Activated B cell treated with CpG ODN at 0.5 μM for 24 hours (primary cell): ENCODE measurements at regions of chr1 and their contacts with region 1.

Region 1: GRCh38 chr1:179002552-179003345 is 22.9 kb upstream of the FAM20B start:
- DNase-seq: peak; percentile 79
- ATAC-seq: peak; percentile 95
- H3K4me3 Mint-ChIP-seq: peak overlapping the region; percentile 26
- H3K27ac Mint-ChIP-seq: no peak overlapping the region
- H3K4me1 Mint-ChIP-seq: peaks cover 15% of the 10 kb centered on the region
- H3K27me3 Mint-ChIP-seq: no peaks in the 10 kb centered on the region
- CTCF ChIP-seq: peak; percentile 96

Region 2: DNA sequence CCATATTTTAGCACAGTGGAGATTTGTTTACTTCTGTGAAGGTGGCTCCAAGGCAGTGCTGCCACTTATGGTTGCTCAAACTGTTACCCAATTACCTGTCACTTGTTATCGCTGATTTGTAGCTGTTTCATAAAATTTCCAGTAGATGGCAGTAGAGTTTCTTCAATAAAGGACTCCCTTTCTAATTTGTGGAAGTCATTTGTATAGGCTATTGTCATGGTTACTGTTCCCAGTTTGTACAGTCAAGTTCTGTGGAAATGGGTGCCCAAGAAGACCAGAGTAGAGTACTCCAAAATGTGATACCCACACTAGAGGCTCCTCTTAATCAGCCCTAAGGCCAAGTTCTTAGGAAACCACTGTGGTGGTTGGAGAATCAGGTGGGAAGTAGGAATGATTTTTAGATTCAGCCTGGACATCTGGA is 692.1 kb before region 1 on chr1:
- CTCF ChIA-PET with region 1: interaction called, 51 read pairs
- POLR2A ChIA-PET with region 1: no interaction called
- intact Hi-C with region 1: loop called (anchors 2 kb)
- DNase-seq: no peak
- ATAC-seq: peak; percentile 47
- H3K4me3 Mint-ChIP-seq: no peak overlapping the region
- H3K27ac Mint-ChIP-seq: no peak overlapping the region
- H3K4me1 Mint-ChIP-seq: no peaks in the 10 kb centered on the region
- H3K27me3 Mint-ChIP-seq: peaks cover 3% of the 10 kb centered on the region
- CTCF ChIP-seq: peak; percentile 74

Region 3: DNA sequence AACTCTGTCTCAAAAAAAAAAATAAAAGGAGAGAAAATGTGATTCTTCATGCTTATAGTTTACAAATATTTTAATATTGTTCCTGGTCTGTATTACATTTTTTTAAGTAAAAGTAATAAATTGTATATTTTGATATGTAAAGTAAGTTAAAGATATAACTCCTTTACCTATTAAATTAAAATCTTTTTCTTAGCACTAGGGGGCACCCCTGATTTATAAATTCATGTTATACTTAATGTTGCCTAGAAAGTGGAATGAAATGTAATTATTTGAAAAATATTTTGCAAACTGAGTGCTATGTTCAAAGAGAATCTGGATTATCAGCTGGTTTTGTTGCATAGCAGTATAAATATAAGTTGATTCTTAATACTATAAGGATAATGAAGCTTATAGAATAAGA is 228.5 kb before region 1 on chr1:
- CTCF ChIA-PET with region 1: interaction called, 41 read pairs
- POLR2A ChIA-PET with region 1: no interaction called
- intact Hi-C with region 1: loop called (anchors 1 kb)
- DNase-seq: no peak
- ATAC-seq: peak; percentile 54
- H3K4me3 Mint-ChIP-seq: no peak overlapping the region
- H3K27ac Mint-ChIP-seq: peak overlapping the region; percentile 61
- H3K4me1 Mint-ChIP-seq: peaks cover 59% of the 10 kb centered on the region
- H3K27me3 Mint-ChIP-seq: no peaks in the 10 kb centered on the region
- CTCF ChIP-seq: no peak

Region 4: GRCh38 chr1:178885869-178886268 is 116.9 kb before region 1 on chr1:
- CTCF ChIA-PET with region 1: interaction called, 9 read pairs
- POLR2A ChIA-PET with region 1: no interaction called
- intact Hi-C with region 1: loop called (anchors 5 kb)
- DNase-seq: no peak
- ATAC-seq: no peak
- H3K4me3 Mint-ChIP-seq: no peak overlapping the region
- H3K27ac Mint-ChIP-seq: peak overlapping the region; percentile 80
- H3K4me1 Mint-ChIP-seq: peaks cover 11% of the 10 kb centered on the region
- H3K27me3 Mint-ChIP-seq: no peaks in the 10 kb centered on the region
- CTCF ChIP-seq: no peak

Region 5: DNA sequence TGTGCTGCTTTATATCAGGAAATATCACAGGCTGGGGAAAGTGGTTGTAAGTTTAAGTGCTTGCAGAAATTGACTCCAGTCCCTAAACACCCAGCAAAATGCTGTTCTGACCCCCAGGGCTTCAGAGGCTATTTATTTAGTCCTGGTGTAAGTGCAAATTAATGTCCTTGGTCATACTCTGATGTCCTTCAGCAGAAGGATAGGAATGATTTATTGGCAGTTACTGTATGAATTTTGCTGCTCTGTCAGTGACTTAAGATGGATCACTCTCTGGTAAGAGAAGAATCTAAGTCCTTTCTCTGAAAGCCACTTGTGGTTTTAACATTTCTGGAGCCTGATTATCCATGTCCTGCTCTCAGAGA is 44.9 kb after region 1 on chr1:
- CTCF ChIA-PET with region 1: no interaction called
- POLR2A ChIA-PET with region 1: no interaction called
- intact Hi-C with region 1: no loop called
- DNase-seq: no peak
- ATAC-seq: no peak
- H3K4me3 Mint-ChIP-seq: no peak overlapping the region
- H3K27ac Mint-ChIP-seq: no peak overlapping the region
- H3K4me1 Mint-ChIP-seq: peaks cover 9% of the 10 kb centered on the region
- H3K27me3 Mint-ChIP-seq: no peaks in the 10 kb centered on the region
- CTCF ChIP-seq: no peak

Region 6: GRCh38 chr1:179516976-179517705 is 514.4 kb after region 1 on chr1:
- CTCF ChIA-PET with region 1: no interaction called
- POLR2A ChIA-PET with region 1: no interaction called
- intact Hi-C with region 1: no loop called
- DNase-seq: no peak
- ATAC-seq: no peak
- H3K4me3 Mint-ChIP-seq: no peak overlapping the region
- H3K27ac Mint-ChIP-seq: no peak overlapping the region
- H3K4me1 Mint-ChIP-seq: no peaks in the 10 kb centered on the region
- H3K27me3 Mint-ChIP-seq: peaks cover 2% of the 10 kb centered on the region
- CTCF ChIP-seq: no peak